IMR-90 (cell line): ENCODE measurements at regions of chr19 and their contacts with region 1.

Region 1: GRCh38 chr19:2236314-2237050 is at the starts of genes PLEKHJ1 and SF3A2:
- DNase-seq: peak; percentile 96
- ATAC-seq: peak; percentile 82
- H3K4me3 ChIP-seq: peak within 1 kb of the TSS; percentile 67
- H3K27ac ChIP-seq: peak within 1 kb of the TSS; percentile 93
- H3K4me1 ChIP-seq: peaks cover 22% of the 10 kb centered on the region
- H3K27me3 ChIP-seq: no peaks in the 10 kb centered on the region
- CTCF ChIP-seq: peak; percentile 99
- POLR2A ChIP-seq: peak; percentile 76
- RAD21 ChIP-seq: peak; percentile 94
- total RNA-seq, gene PLEKHJ1: 31.7 and 33.1 TPM in 2 replicates
- total RNA-seq, gene SF3A2: 4.8 and 7.5 TPM in 2 replicates

Region 2: GRCh38 chr19:2151339-2152229 is 84.9 kb before region 1 on chr19 and contains the start of gene AP3D1:
- CTCF ChIA-PET with region 1: interaction called, 5 read pairs
- POLR2A ChIA-PET with region 1: no interaction called
- dilution Hi-C with region 1: no loop called
- in situ Hi-C with region 1: no loop called
- intact Hi-C with region 1: loop called (anchors 1 kb)
- DNase-seq: peak; percentile 100
- ATAC-seq: peak; percentile 95
- H3K4me3 ChIP-seq: peak within 1 kb of the TSS; percentile 99
- H3K27ac ChIP-seq: peak within 1 kb of the TSS; percentile 97
- H3K4me1 ChIP-seq: peaks cover 10% of the 10 kb centered on the region
- H3K27me3 ChIP-seq: no peaks in the 10 kb centered on the region
- CTCF ChIP-seq: no peak
- POLR2A ChIP-seq: peak; percentile 52; the same call in 1 of the 2 replicates
- RAD21 ChIP-seq: no peak
- total RNA-seq, gene AP3D1: 75.3 and 76.1 TPM in 2 replicates

Region 3: DNA sequence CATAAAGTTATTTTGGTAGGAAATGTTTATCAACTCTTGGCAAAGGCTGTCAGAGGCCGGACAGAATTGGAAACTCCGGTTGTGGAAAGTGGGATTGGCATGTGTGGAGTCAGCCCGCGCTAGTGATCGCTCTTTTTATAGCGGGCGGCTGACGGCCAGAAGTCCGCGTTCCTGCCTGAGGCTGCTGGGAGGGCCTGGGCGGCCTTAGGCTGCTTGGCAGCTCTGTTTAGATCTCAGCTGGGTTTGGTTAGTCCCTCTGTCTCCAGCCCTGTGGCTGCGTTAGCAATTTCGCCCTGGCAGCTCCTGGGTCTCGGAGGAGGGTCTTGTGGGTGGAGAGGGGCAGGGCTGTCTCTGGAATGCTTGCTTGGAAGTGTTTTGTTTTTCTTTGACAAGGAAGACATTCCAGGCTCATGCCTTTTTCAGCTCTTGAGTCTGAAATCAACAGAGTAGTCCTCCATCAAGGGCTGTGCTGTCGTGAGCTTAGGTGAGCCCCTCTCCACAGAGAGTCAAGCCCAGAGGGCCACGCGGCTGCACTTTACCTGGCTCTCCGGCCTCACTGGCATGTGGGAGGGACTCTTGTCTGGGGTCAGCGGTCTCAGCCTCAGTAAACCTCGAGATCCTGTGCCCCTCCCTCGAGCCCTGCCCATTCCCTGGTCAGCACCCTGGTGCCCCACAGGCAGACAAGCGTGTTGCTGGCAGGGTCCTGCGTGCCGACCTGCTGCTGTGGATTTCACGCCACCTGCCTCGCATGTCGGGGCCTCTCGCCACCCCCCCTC is 50.2 kb before region 1 on chr19:
- CTCF ChIA-PET with region 1: no interaction called
- POLR2A ChIA-PET with region 1: no interaction called
- dilution Hi-C with region 1: no loop called
- in situ Hi-C with region 1: no loop called
- intact Hi-C with region 1: loop called (anchors 1 kb)
- DNase-seq: peak; percentile 95
- ATAC-seq: peak; percentile 96
- H3K4me3 ChIP-seq: no peak overlapping the region
- H3K27ac ChIP-seq: peak overlapping the region; percentile 69
- H3K4me1 ChIP-seq: peaks cover 24% of the 10 kb centered on the region
- H3K27me3 ChIP-seq: no peaks in the 10 kb centered on the region
- CTCF ChIP-seq: no peak
- POLR2A ChIP-seq: peak; percentile 74
- RAD21 ChIP-seq: no peak; the same call in 1 of the 2 replicates

Region 4: GRCh38 chr19:2273356-2274184 is 37.1 kb after region 1 on chr19:
- CTCF ChIA-PET with region 1: no interaction called
- POLR2A ChIA-PET with region 1: interaction called, 8 read pairs
- dilution Hi-C with region 1: no loop called
- in situ Hi-C with region 1: no loop called
- intact Hi-C with region 1: loop called (anchors 1 kb)
- DNase-seq: peak; percentile 52
- ATAC-seq: peak; percentile 5
- H3K4me3 ChIP-seq: no peak overlapping the region
- H3K27ac ChIP-seq: peak overlapping the region; percentile 16; the same call in 1 of the 2 replicates
- H3K4me1 ChIP-seq: peaks cover 14% of the 10 kb centered on the region
- H3K27me3 ChIP-seq: no peaks in the 10 kb centered on the region
- CTCF ChIP-seq: peak; percentile 88
- POLR2A ChIP-seq: no peak
- RAD21 ChIP-seq: peak; percentile 60

Region 5: GRCh38 chr19:2315818-2316353 is 79.4 kb after region 1 on chr19:
- CTCF ChIA-PET with region 1: no interaction called
- POLR2A ChIA-PET with region 1: interaction called, 4 read pairs
- dilution Hi-C with region 1: no loop called
- in situ Hi-C with region 1: no loop called
- intact Hi-C with region 1: loop called (anchors 2 kb)
- DNase-seq: peak; percentile 56
- ATAC-seq: peak; percentile 99
- H3K4me3 ChIP-seq: no peak overlapping the region
- H3K27ac ChIP-seq: no peak overlapping the region
- H3K4me1 ChIP-seq: no peaks in the 10 kb centered on the region
- H3K27me3 ChIP-seq: peaks cover 6% of the 10 kb centered on the region
- CTCF ChIP-seq: peak; percentile 83
- POLR2A ChIP-seq: no peak
- RAD21 ChIP-seq: peak; percentile 87

Region 6: GRCh38 chr19:2355168-2356035 is 118.9 kb after region 1 on chr19:
- CTCF ChIA-PET with region 1: no interaction called
- POLR2A ChIA-PET with region 1: no interaction called
- dilution Hi-C with region 1: no loop called
- in situ Hi-C with region 1: no loop called
- intact Hi-C with region 1: no loop called
- DNase-seq: no peak
- ATAC-seq: no peak
- H3K4me3 ChIP-seq: no peak overlapping the region
- H3K27ac ChIP-seq: no peak overlapping the region
- H3K4me1 ChIP-seq: no peaks in the 10 kb centered on the region
- H3K27me3 ChIP-seq: peaks cover 15% of the 10 kb centered on the region
- CTCF ChIP-seq: no peak
- POLR2A ChIP-seq: no peak
- RAD21 ChIP-seq: no peak

Region 7: DNA sequence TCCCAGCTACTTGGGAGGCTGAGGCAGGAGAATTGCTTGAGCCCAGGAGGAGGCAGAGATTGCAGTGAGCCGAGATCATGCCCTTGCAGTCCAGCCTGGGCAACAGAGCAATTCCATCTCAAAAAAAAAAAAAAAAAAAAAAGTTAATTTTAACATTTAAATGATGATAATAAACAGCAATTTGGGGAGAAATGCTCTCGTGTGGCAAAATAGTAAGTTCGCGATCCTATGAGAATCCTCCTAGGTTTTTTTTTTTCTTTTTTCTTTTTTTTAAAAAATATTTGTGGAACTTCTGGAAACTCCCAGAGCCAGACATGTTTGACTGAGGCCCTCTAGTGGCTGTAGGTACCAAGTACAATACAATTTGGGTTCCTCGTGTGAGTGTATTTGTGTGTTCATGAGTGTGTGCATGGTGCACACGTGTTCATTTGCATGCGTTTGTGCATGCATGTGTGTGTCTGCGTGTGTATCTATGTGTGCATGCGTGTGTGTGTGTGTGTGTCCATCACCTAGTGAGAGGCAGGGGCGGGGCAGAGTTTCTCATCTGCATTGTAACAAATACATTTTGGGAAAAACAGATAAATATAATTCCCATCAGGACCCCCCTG is 154.7 kb after region 1 on chr19:
- CTCF ChIA-PET with region 1: no interaction called
- POLR2A ChIA-PET with region 1: no interaction called
- dilution Hi-C with region 1: no loop called
- in situ Hi-C with region 1: no loop called
- intact Hi-C with region 1: loop called (anchors 1 kb)
- DNase-seq: peak; percentile 78
- ATAC-seq: peak; percentile 85
- H3K4me3 ChIP-seq: no peak overlapping the region
- H3K27ac ChIP-seq: no peak overlapping the region
- H3K4me1 ChIP-seq: no peaks in the 10 kb centered on the region
- H3K27me3 ChIP-seq: peaks cover 7% of the 10 kb centered on the region
- CTCF ChIP-seq: peak; percentile 78
- POLR2A ChIP-seq: no peak
- RAD21 ChIP-seq: peak; percentile 77

Region 8: GRCh38 chr19:2461751-2462634 is 225.5 kb after region 1 on chr19:
- CTCF ChIA-PET with region 1: no interaction called
- POLR2A ChIA-PET with region 1: no interaction called
- dilution Hi-C with region 1: no loop called
- in situ Hi-C with region 1: no loop called
- intact Hi-C with region 1: no loop called
- DNase-seq: peak; percentile 56
- ATAC-seq: peak; percentile 78
- H3K4me3 ChIP-seq: peak overlapping the region; percentile 75
- H3K27ac ChIP-seq: peak overlapping the region; percentile 78
- H3K4me1 ChIP-seq: peaks cover 3% of the 10 kb centered on the region; the same call in 1 of the 2 replicates
- H3K27me3 ChIP-seq: no peaks in the 10 kb centered on the region
- CTCF ChIP-seq: 0 out of 2 replicates have a peak, but pooled peaks have one; percentile 7
- POLR2A ChIP-seq: no peak
- RAD21 ChIP-seq: no peak

Region 9: DNA sequence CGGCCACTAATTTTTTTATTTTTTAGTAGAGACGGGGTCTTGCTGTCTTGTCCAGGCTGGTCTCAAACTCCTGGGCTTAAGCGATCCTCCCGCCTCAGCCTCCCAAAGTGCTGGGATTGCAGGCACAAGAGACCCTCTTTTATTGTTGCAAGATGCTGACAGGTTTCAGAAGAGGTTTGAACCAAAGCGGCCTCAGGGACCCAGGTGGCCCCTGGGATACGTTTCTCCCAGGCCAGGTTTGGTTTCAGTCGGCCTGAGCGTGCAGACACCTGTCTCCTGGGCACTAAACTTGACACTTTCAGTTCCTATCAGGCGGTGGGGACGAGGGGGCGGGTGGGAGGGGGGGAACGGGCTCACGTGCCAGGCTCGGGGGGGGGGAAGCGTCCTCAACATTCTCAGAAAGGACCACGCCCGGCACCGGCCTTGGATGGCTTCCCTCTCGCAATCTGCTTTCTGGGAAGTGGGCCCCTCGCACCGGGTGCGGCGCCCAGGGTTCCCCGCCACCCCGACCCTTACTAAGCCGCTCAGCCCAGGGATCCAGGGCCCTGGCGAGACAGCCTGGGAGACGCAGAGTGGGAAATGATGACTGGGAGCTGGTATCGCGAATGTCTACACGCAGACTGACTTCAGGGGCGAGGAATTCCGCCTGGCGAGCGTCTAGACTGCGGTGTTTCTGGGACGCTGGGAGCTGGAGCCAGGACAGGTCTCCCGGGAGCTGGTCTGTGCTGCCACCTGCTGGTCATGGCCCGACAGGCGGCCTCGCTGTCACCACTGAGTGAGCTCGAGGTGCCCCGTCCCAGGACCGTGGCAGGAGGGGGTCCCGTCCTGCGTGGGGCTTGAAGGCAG is 374.4 kb after region 1 on chr19:
- CTCF ChIA-PET with region 1: interaction called, 4 read pairs
- POLR2A ChIA-PET with region 1: no interaction called
- dilution Hi-C with region 1: no loop called
- in situ Hi-C with region 1: no loop called
- intact Hi-C with region 1: loop called (anchors 5 kb)
- DNase-seq: peak; percentile 94
- ATAC-seq: peak; percentile 97
- H3K4me3 ChIP-seq: peak overlapping the region; percentile 21
- H3K27ac ChIP-seq: peak overlapping the region; percentile 8; the same call in 1 of the 2 replicates
- H3K4me1 ChIP-seq: no peaks in the 10 kb centered on the region
- H3K27me3 ChIP-seq: peaks cover 8% of the 10 kb centered on the region
- CTCF ChIP-seq: peak; percentile 99
- POLR2A ChIP-seq: no peak
- RAD21 ChIP-seq: peak; percentile 96

Region 10: GRCh38 chr19:3125900-3126524 is 889.5 kb after region 1 on chr19:
- CTCF ChIA-PET with region 1: no interaction called
- POLR2A ChIA-PET with region 1: no interaction called
- dilution Hi-C with region 1: no loop called
- in situ Hi-C with region 1: no loop called
- intact Hi-C with region 1: no loop called
- DNase-seq: no peak
- ATAC-seq: peak; percentile 88
- H3K4me3 ChIP-seq: no peak overlapping the region
- H3K27ac ChIP-seq: no peak overlapping the region
- H3K4me1 ChIP-seq: no peaks in the 10 kb centered on the region
- H3K27me3 ChIP-seq: no peaks in the 10 kb centered on the region
- CTCF ChIP-seq: peak; percentile 53
- POLR2A ChIP-seq: no peak
- RAD21 ChIP-seq: peak; percentile 38; the same call in 1 of the 2 replicates